ENCODE measurements at regions of chr6 and their contacts with region 1.

Region 1: DNA sequence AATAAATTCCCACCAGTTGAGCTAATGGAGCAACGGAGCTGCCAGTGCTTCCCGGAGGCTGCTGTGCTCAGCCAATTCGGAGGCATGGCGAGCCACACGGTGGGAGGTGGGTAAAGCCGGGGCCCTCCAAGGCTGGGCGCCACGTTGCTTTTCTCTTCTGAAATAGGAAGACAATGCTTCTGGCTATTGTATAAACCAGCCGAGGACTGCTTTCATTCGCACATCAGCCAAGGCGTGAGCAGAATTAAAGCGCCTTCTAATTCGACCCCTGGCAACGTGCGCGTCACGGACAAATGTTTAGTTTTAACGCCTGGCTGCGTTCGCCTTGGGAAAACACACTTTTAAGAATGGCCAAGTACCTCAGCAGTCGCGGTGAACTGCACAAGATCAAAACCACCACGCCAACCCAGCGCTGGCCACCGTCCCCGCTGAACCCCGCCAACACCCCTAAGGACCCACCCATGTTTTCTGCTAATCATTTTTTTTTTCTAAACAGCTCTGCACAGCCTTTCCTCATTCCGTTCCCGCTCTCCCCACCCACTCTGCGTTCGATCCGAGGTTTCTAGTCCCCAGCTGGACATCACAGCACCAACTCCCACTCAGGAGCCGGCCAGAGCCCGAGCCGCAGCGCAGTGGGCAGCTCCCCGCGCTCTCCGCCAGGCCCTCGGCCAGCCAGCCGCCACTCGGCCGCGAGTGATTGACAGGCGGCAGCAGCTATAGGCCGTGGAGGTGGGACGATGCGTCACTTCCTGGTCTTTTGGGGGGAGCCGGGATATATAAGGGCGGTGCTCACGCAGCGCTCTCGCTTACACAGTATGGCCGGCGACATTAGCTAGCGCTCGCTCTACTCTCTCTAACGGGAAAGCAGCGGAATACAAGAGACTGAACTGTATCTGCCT is at the start of gene AMD1:
- DNase-seq: peak; percentile 97 to 99 (median 98)
- H3K4me3 ChIP-seq: peak within 1 kb of the TSS; percentile 64 to 99 (median 92)
- H3K27ac ChIP-seq: peak within 1 kb of the TSS; percentile 72 to 98 (median 93)
- H3K27me3 ChIP-seq: no peaks in the 10 kb centered on the region
- CTCF ChIP-seq: peak in 22 of 56 donors; percentile 2 to 49 (median 15)
- total RNA-seq, gene AMD1: 51.8 to 156 (median 104) TPM

Region 2: DNA sequence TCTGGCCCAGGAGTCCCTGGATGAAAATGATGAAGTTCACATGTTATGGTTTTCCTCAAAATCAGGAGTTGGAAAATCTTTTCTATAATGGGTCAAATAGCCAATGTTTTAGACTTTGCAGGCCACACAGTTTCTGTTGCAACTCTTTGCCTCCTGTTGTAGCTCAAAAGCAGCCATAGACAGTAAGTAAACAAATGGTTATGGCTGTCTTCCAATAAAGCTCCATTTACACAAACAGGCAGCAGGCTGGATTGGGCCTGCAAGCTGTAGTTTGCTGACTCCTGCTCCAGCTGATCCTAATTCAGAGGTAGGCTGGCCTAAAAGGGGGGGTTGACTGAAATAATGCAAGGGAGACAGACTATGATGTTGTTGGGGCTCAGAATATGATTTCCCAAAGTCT is 549.0 kb before region 1 on chr6:
- intact Hi-C with region 1: no loop called
- DNase-seq: no peak
- H3K4me3 ChIP-seq: no peak overlapping the region
- H3K27ac ChIP-seq: peak overlapping the region in 56 of 59 donors; percentile 7 to 92 (median 76)
- H3K27me3 ChIP-seq: no peaks in the 10 kb centered on the region
- CTCF ChIP-seq: no peak

Region 3: GRCh38 chr6:110537208-110538123 is 336.8 kb before region 1 on chr6:
- intact Hi-C with region 1: loop called in 1 of 2 experiments (anchors 5 kb)
- DNase-seq: no peak
- H3K4me3 ChIP-seq: no peak overlapping the region
- H3K27ac ChIP-seq: peak overlapping the region; percentile 52 to 100 (median 99)
- H3K27me3 ChIP-seq: no peaks in the 10 kb centered on the region
- CTCF ChIP-seq: peak in 2 of 56 donors; percentile 5 to 16

Region 4: DNA sequence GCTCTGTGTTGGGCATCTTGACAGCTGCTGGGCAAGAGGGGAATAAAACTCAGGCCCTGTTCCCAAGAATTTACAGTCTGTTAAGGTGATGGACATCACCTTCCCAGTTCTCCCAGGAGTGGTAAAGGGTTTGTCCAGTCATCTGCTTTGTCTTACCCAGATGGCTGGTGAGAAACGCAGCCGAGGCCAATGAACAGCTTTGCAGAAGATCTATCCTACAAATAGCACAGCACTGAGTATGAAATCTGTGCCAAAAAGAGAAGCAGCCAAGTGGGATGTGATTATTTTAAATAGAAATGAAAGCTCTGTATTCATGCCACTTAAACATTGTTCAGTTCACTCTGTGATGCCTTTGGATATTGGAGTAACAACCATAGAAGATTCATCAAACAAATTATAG is 265.1 kb before region 1 on chr6:
- intact Hi-C with region 1: loop called in 1 of 2 experiments (anchors 5 kb)
- DNase-seq: peak in 7 of 10 donors; percentile 37 to 72 (median 62)
- H3K4me3 ChIP-seq: peak overlapping the region in 1 of 59 donors; percentile 15
- H3K27ac ChIP-seq: peak overlapping the region; percentile 31 to 98 (median 91)
- H3K27me3 ChIP-seq: no peaks in the 10 kb centered on the region
- CTCF ChIP-seq: no peak

Region 5: GRCh38 chr6:110682460-110682853 is 191.8 kb before region 1 on chr6:
- intact Hi-C with region 1: loop called (anchors 2 to 5 kb)
- DNase-seq: peak in 3 of 10 donors; percentile 51 to 69 (median 64)
- H3K4me3 ChIP-seq: peak overlapping the region in 6 of 59 donors; percentile 2 to 30 (median 10)
- H3K27ac ChIP-seq: peak overlapping the region in 54 of 59 donors; percentile 7 to 96 (median 82)
- H3K27me3 ChIP-seq: no peaks in the 10 kb centered on the region
- CTCF ChIP-seq: peak; percentile 45 to 89 (median 78)

Region 6: DNA sequence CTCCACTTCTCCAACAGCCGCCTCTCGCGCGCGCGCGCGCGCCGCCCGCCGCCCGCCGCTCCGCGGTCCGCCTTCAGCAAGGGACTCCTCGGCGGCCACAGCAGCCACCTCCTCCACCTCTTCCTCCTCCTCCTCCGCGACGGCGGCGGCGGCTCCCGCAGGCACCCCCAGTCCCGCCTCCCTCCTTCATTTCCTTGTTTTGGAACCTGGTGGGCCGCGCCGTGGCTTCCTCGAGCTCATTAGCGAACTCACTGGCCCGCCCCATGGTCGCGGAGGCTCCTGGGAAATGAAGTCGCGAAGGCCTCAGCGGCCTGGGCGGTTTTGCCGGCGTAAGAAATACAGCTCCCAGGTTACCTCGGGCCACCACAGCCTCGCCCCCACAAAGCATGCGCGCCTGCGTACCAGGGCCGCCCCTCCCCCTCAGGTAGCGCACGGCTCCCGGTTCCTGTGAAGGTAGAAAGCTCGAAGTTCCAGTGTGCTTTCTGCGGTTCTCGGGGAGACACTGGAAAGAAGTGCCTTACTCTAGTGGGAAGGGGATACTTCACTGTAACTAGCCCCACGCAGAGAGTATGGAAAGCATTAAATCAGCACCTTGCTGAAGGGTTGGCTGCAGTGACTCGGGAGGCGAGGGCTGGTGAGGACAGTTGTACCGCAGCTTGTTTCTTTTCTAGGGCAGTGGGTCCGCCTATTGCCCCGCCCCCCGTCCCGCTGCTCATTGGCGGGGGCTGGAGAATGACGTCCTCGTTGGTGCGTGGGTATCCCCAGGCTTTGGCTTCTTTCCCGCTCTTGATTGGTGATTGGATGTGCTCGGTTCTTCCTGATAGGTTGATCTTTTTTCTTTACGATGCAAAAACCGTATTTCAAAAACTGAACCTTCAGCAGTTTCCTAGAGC is 58.8 kb before region 1 on chr6 and contains the start of gene CDK19:
- intact Hi-C with region 1: loop called (anchors 1 kb)
- DNase-seq: peak; percentile 97 to 98 (median 98)
- H3K4me3 ChIP-seq: peak within 1 kb of the TSS; percentile 69 to 100 (median 95)
- H3K27ac ChIP-seq: peak within 1 kb of the TSS; percentile 83 to 99 (median 97)
- H3K27me3 ChIP-seq: no peaks in the 10 kb centered on the region
- CTCF ChIP-seq: peak in 13 of 56 donors; percentile 5 to 45 (median 21)
- total RNA-seq, gene CDK19: 35.3 to 155 (median 56.4) TPM

Region 7: DNA sequence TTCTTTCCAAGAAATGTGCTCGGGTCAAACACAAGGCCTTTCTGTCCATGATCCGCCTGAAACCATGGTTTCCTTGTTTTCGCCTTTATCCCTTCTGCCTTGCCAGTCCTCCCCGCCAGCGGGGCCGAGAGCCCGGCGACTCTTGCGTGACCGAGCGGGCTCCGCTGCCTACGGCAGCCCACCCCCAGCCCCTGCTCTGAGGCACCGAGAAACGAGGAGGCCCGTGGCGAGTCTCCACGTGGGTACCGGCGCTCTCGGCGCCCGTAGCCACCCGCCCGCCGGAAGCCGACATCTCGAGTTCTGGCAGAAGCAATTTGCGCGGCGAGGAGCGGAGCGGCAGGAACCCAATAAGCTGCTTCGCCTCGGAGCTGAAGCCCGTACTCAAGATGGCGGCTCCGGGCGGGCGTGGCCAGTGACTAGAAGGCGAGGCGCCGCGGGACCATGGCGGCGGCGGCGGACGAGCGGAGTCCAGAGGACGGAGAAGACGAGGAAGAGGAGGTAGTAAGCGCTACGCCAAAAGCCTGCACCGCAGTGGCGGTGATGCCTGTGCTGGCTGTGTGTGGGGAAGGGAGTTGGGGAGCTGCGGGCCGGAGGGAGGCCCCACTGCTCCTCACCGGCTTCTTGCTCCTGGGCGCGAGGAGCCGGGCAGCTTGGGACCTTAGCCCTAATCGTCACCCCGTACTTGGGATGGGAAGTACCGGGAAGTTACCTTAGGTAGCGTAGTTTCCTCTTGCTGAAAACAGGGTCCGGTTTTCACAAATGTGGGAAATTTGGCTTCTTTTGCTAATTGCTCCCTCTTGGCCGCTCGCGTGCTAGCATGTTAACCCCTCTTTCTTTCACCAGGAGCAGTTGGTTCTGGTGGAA is 84.3 kb after region 1 on chr6 and contains the start of gene GTF3C6:
- intact Hi-C with region 1: loop called (anchors 2 to 5 kb)
- DNase-seq: peak; percentile 90 to 96 (median 94)
- H3K4me3 ChIP-seq: peak within 1 kb of the TSS; percentile 56 to 98 (median 88)
- H3K27ac ChIP-seq: peak within 1 kb of the TSS; percentile 78 to 100 (median 96)
- H3K27me3 ChIP-seq: no peaks in the 10 kb centered on the region
- CTCF ChIP-seq: peak in 26 of 56 donors; percentile 3 to 58 (median 30)
- total RNA-seq, gene GTF3C6: 30.8 to 68.0 (median 43.6) TPM

Measured in dorsolateral prefrontal cortex (tissue), 120 donors.